ENCODE measurements at regions of chr5 and their contacts with region 1.

Region 1: GRCh38 chr5:150846654-150847333 is 473 bp downstream of the IRGM start:
- DNase-seq: no peak
- H3K4me3 ChIP-seq: peak overlapping the region in 1 of 4 donors; percentile 10
- H3K27ac ChIP-seq: no peak overlapping the region
- H3K4me1 ChIP-seq: peaks cover 0 to 9% (median 0%) of the 10 kb centered on the region in 3 donors
- H3K27me3 ChIP-seq: no peaks in the 10 kb centered on the region
- CTCF ChIP-seq: peak; percentile 58 to 89 (median 69)
- POLR2A ChIP-seq: no peak

Region 2: GRCh38 chr5:150738862-150739261 is 107.9 kb before region 1 on chr5:
- intact Hi-C with region 1: no loop called
- DNase-seq: no peak
- H3K4me3 ChIP-seq: no peak overlapping the region
- H3K27ac ChIP-seq: no peak overlapping the region
- H3K4me1 ChIP-seq: peaks cover 0 to 7% (median 0%) of the 10 kb centered on the region in 3 donors
- H3K27me3 ChIP-seq: no peaks in the 10 kb centered on the region
- CTCF ChIP-seq: no peak
- POLR2A ChIP-seq: no peak

Region 3: DNA sequence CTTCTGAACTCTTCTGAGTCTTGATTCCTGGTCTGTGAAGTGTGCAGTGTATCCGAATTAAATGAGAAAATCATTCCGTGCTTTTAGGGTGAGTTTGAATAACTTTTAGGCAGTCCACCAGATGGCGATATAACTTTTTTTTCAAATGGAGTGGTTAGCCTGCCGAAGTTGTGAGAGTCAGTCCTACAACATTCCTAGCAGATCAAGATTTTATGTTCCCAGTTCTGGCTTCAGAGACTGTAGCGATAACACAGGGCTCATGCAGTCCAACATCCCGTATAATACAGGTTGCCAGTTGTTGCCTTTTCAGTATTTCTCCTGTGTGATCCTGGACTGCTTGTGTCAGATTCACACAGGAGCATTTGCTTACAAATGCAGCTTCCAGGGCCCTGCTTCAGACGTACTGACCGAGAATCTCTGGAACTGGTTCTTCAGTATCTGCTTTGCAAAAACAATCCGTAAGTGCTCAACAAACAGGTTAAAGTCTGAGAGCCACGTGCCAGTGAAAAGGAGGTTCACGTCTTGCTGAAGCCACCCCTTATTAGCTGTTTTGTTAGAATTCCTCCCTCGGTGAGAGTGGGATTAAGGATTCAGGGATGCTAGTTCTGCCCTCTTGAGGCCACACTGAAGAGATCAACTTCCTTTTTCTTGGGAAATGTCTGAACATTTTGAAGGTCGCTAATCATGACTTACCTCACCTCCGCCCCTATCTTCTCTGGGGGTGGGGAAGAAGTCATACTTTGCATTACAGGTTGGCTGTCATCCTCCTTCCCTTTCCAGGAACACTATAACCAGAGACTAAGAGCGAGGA is 45.5 kb before region 1 on chr5:
- intact Hi-C with region 1: loop called (anchors 5 kb)
- DNase-seq: no peak
- H3K4me3 ChIP-seq: peak overlapping the region; percentile 7 to 59 (median 30)
- H3K27ac ChIP-seq: peak overlapping the region in 3 of 4 donors; percentile 54 to 65 (median 65)
- H3K4me1 ChIP-seq: peaks cover 0 to 12% (median 7%) of the 10 kb centered on the region in 3 donors
- H3K27me3 ChIP-seq: no peaks in the 10 kb centered on the region
- CTCF ChIP-seq: peak; percentile 15 to 64 (median 38)
- POLR2A ChIP-seq: no peak

Region 4: GRCh38 chr5:150816946-150817345 is 29.8 kb before region 1 on chr5:
- intact Hi-C with region 1: loop called (anchors 2 kb)
- DNase-seq: no peak
- H3K4me3 ChIP-seq: no peak overlapping the region
- H3K27ac ChIP-seq: no peak overlapping the region
- H3K4me1 ChIP-seq: no peaks in the 10 kb centered on the region
- H3K27me3 ChIP-seq: peaks cover 0 to 3% (median 0%) of the 10 kb centered on the region in 4 donors
- CTCF ChIP-seq: no peak
- POLR2A ChIP-seq: no peak